AG04450 (cell line): ENCODE measurements at regions of chr3 and their contacts with region 1.

Region 1: GRCh38 chr3:195522254-195523023 is 20.7 kb downstream of the PPP1R2 start:
- DNase-seq: no peak
- H3K4me3 ChIP-seq: no peak overlapping the region
- H3K27ac ChIP-seq: no peak overlapping the region
- H3K27me3 ChIP-seq: no peaks in the 10 kb centered on the region
- CTCF ChIP-seq: peak; percentile 52

Region 2: DNA sequence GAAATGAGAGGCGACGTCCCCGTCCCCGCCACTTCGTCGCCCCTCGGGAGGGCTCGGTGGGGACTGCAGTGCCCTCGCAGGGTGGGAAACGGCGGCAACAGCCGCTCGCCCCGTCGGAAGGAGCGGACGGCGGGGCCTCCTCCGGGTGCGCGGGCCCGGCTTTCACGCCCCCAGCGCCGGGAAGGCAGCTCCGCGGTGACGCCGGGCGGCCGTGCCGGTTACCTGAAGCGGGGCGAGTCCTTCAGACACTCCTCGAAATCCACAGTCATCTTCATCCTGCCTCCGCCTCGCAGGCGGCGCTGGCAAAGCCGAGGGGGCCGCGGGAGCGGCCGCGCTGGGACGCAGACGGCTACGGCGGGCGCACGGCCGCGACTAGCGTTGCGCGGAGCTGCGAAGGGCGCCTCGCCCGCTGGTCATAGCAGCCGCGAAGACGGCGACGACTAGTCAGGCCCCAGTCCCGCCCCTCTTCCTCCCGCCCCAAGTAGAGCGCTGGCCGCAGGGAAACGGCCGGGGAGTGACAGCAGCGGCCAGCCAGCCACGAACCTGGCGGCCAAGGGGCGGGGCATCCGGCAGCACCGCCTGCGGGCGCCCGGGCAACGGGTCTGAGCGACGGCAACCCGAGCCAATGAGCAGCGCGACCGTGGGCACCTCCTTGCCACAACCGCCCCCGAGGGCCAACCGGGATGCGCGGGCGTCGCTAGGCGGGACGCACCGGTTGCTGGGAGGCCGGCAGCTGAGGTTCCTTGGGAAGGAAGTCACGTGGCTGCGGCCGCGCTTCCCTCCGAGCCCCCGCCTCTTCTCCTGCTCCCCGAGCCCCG is 79.7 kb before region 1 on chr3 and contains the start of gene ACAP2:
- CTCF ChIA-PET with region 1: interaction called, 11 read pairs
- POLR2A ChIA-PET with region 1: no interaction called
- DNase-seq: peak; percentile 99
- H3K4me3 ChIP-seq: peak within 1 kb of the TSS; percentile 60
- H3K27ac ChIP-seq: peak within 1 kb of the TSS; percentile 25
- H3K27me3 ChIP-seq: no peaks in the 10 kb centered on the region
- CTCF ChIP-seq: no peak
- polyA plus RNA-seq, gene ACAP2: 35.9 and 50.2 TPM in 2 replicates

Region 3: GRCh38 chr3:195532834-195533233 is 10.4 kb after region 1 on chr3:
- CTCF ChIA-PET with region 1: interaction called, 15 read pairs
- POLR2A ChIA-PET with region 1: interaction called, 4 read pairs
- DNase-seq: no peak
- H3K4me3 ChIP-seq: no peak overlapping the region
- H3K27ac ChIP-seq: no peak overlapping the region
- H3K27me3 ChIP-seq: no peaks in the 10 kb centered on the region
- CTCF ChIP-seq: no peak